Right ventricle myocardium superior (tissue), 1 donor: ENCODE measurements at regions of chr1 and their contacts with region 1.

Region 1: DNA sequence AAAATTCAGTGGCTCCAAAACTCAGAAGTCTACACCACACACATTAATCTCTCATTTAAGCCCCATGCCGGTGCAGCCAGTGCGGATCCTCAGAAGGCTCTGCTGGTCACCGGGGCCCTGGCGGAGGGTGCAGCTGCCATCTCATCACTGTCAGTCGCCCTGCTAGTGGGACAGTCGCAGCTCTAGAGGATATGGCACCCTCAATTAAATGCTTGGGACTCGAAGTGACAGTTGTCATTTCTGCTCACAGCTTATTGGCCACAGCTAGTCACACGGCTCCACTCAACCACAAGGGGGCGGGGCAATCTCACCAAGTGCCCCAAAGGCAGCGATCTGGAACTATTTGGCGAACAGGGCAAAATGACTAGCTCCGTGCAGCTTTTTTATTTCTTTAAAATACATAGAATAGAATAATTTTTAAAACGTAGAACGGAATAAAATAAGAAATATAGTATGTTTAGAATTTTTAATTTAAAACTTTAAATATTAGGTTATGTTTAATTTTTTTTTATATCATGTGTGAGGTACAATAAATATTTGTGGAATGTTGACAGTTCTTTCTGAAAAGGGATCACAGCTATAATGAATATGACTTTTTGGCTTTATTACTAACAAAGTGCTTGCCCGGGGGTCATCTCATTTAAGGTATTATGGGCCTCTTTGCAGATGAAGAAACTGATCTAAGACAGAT is 8.0 kb upstream of the MAN1C1 start:
- DNase-seq: peak; percentile 93
- ATAC-seq: peak; percentile 94

Region 2: DNA sequence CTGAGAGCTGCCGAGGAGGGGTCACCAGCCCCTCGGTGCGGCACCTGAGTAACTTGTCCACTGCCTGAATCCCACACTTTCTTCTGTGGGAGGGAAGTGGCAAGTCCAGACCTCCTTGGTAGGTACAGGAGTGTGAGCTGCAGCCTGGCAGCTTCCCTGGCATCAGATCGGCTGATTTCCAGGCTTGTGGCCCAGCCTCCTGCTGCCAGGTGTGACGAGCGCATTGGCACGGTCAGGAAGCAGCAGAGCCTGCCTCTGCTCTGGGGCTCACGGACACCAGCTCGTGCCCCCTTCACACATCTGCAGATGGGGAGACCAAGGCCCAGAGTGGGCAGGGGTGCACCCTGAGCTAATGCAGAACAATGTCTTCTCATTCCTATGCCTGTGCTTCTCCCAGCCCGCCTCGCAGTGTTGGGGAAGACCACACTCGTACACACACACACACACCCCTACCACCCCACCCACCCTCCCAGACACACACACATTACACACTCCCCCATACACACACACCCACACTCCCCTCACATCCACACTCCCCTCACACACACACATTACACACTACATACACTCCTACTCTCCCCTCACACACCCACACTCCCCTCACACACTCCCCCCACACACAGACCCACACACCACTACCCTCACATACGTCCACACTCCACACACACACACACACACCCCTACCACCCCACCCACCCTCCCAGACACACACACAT is 158.2 kb after region 1 on chr1:
- intact Hi-C with region 1: no loop called
- DNase-seq: no peak
- ATAC-seq: peak; percentile 35

Region 3: DNA sequence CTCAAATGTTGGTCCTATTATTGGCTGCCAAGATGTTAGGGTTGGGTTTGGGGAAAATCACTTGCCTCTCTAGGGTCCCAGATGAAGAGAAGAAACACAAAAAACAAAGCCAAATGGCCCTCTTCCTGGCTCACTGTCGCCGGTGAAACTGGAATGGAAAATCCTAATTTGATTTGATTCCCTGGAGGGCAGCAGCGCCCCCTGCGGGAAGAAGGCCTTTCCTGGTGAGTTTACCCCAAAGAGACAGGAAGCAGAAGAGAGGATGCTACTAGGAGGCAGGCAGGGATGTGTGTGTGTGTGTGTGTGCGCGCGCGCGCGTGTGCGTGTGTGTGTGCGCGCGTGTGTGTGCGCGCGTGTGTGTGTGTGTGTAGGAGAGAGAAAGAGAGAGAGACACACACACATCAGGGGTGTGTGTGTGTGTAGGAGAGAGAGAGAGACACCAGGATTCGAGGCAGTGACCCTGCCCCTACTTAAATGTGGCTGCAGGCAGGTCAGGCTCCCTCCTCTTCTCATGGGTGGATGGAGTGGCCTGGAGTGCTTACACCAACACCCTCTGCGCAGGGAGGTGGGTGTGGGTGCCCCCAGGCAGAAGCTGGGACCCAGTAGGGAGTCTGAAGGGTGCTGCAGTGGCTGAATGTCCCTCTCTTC is 188.3 kb after region 1 on chr1:
- intact Hi-C with region 1: loop called (anchors 5 kb)
- DNase-seq: peak; percentile 91
- ATAC-seq: peak; percentile 46